Ovary (tissue), 10 donors: ENCODE measurements at regions of chr2 and their contacts with region 1.

Region 1: DNA sequence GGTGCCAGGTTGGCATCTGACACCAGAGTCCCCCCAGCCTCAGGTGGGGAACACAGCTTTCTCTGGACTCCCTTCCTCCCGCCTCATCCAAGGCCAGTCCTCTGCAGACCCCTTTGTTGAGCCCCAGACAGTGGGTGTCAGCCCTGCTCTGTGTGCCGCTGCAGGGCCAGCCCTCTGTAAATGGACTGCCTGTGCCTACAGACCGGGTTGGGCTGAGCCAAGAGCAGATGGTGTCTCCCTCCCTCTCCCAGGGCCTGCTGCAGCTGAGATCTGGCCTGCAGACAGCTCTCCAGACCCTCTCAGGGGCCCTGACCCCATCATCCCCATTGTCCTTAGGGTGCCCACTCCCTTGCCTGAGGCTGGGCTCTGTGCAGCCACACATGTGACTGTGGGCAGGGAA is 160.8 kb downstream of the KLHL29 start:
- DNase-seq: no peak
- H3K4me3 ChIP-seq: no peak overlapping the region
- H3K27ac ChIP-seq: no peak overlapping the region
- H3K4me1 ChIP-seq: peaks cover 3% of the 10 kb centered on the region
- H3K27me3 ChIP-seq: no peaks in the 10 kb centered on the region
- CTCF ChIP-seq: no peak
- EP300 ChIP-seq: no peak
- POLR2A ChIP-seq: no peak

Region 2: DNA sequence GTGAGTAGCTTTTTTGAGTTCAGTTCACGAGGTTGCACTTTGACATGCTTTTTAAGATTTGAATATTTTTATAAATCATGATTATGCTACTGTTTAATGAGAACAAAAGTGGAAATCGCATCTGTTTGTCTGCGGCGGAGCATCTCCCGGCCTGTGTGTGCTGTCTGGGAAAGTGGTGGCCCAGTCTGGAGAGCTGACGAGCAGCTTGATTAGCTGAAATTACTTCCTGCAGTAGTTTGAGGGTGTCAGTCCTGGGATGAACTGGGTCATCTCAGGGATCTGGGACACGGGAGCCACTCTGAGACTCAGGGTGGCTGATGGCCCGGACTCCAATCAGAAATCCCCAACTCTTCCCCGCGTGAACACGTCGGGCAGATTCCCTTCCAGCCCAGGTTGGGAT is 45.0 kb before region 1 on chr2:
- intact Hi-C with region 1: loop called in 1 of 4 experiments (anchors 2 kb)
- DNase-seq: no peak
- H3K4me3 ChIP-seq: no peak overlapping the region
- H3K27ac ChIP-seq: no peak overlapping the region
- H3K4me1 ChIP-seq: peaks cover 10% of the 10 kb centered on the region
- H3K27me3 ChIP-seq: no peaks in the 10 kb centered on the region
- CTCF ChIP-seq: no peak
- EP300 ChIP-seq: no peak
- POLR2A ChIP-seq: no peak